ENCODE measurements at regions of chr3 and their contacts with region 1.

Region 1: DNA sequence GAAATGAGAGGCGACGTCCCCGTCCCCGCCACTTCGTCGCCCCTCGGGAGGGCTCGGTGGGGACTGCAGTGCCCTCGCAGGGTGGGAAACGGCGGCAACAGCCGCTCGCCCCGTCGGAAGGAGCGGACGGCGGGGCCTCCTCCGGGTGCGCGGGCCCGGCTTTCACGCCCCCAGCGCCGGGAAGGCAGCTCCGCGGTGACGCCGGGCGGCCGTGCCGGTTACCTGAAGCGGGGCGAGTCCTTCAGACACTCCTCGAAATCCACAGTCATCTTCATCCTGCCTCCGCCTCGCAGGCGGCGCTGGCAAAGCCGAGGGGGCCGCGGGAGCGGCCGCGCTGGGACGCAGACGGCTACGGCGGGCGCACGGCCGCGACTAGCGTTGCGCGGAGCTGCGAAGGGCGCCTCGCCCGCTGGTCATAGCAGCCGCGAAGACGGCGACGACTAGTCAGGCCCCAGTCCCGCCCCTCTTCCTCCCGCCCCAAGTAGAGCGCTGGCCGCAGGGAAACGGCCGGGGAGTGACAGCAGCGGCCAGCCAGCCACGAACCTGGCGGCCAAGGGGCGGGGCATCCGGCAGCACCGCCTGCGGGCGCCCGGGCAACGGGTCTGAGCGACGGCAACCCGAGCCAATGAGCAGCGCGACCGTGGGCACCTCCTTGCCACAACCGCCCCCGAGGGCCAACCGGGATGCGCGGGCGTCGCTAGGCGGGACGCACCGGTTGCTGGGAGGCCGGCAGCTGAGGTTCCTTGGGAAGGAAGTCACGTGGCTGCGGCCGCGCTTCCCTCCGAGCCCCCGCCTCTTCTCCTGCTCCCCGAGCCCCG is at the start of gene ACAP2:
- DNase-seq: peak; percentile 99 to 100
- H3K4me3 ChIP-seq: peak within 1 kb of the TSS; percentile 84 to 89
- H3K27ac ChIP-seq: peak within 1 kb of the TSS; percentile 89 to 92
- H3K4me1 ChIP-seq: peaks cover 0 to 8% of the 10 kb centered on the region in 2 donors
- H3K27me3 ChIP-seq: no peaks in the 10 kb centered on the region
- CTCF ChIP-seq: no peak
- total RNA-seq, gene ACAP2: 20.4 TPM

Region 2: DNA sequence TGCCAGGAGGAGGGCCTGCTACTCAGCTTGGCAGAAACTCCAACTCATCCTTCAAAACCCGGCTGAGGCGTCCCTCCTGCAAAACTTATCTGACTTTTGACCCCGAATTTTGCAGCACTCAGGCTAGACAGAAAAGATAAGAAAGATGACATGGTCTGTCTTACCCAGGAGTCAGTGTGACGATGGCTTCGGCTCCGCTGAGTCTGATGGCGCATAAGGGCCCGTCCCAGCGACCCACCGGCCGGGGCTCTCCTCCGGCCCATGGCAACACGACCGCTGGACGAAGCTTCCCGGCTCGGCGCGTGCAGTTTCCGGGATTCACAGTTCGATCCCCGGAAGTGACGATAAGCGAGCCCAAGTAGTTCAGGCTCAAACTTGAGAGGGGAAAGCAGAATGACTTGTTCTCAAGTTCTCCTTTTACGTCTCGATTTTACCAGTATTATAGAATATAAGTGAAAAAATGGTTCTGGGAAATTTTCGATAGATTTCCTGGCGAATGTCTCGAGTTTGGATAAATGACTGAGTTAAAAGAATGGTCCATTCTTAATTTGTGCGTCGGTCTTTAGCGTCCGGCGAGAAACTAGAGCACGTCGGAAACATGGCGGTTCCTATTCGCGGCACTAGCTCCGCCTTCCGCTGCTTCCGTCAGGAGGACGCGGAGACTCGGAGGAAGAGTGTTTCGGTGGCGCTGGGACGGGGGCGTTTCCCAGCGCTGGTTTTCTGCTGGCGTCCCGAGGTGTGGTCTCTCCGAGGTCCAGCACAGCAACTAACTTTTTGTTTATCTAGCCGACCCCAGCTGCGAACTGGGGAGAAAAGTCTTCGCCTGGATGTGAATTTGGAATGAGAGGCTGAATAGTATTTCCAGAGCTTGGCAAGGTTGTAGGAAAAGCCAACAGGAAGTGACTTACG is 770.6 kb before region 1 on chr3 and contains the start of gene LSG1:
- intact Hi-C with region 1: loop called (anchors 2 kb)
- DNase-seq: peak; percentile 44 to 95
- H3K4me3 ChIP-seq: peak within 1 kb of the TSS; percentile 80 to 96
- H3K27ac ChIP-seq: peak within 1 kb of the TSS; percentile 83 to 89
- H3K4me1 ChIP-seq: peaks cover 0 to 10% of the 10 kb centered on the region in 2 donors
- H3K27me3 ChIP-seq: no peaks in the 10 kb centered on the region
- CTCF ChIP-seq: no peak
- total RNA-seq, gene LSG1: 9.4 TPM

Region 3: DNA sequence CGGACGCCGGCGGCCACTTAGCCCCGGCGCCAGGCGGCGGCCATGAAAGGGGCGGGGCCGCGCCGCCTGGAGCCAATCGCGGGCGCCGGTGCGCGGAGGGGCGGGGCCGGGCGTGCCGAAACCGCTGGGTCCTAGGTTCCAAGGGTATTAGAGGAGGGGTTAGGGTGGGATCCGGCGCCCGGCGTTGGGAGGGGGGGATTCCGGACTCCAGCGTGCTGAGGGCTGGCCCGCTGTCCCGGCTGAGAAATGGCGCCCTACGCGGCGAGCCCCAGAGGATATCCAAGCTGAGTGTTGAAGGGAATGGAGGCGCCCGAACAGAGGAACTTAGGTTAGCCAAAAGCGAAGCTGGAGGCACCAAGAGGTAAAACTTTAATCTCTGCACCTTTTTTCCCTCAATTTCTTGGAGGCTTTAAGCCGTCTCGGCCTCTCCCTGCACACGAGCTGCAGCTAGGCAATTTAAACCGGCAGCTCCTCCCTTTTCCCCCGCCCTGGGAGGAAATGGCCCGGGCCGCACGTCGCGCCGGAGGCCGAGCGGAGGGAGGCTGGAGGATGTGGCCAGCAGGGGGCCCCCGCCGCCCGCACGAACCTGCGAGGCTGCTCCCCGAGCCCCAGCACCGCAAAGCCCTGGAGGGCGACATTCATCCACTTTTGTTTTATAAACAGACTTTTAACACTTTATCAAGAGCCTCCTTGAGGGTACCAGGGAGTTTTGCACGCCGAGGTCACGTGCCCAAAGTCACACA is 171.5 kb before region 1 on chr3 and contains the start of gene XXYLT1:
- intact Hi-C with region 1: loop called (anchors 1 kb)
- DNase-seq: peak; percentile 27 to 91
- H3K4me3 ChIP-seq: peak within 1 kb of the TSS; percentile 67 to 90
- H3K27ac ChIP-seq: peak within 1 kb of the TSS; percentile 70 to 82
- H3K4me1 ChIP-seq: peaks cover 0 to 14% of the 10 kb centered on the region in 2 donors
- H3K27me3 ChIP-seq: no peaks in the 10 kb centered on the region
- CTCF ChIP-seq: peak; percentile 91 to 97 (median 94)
- total RNA-seq, gene XXYLT1: 41.0 TPM

Region 4: GRCh38 chr3:196739671-196740480 is 1297.1 kb after region 1 on chr3 and contains the start of gene PAK2:
- intact Hi-C with region 1: loop called (anchors 5 kb)
- DNase-seq: peak; percentile 70 to 95
- H3K4me3 ChIP-seq: peak within 1 kb of the TSS; percentile 80 to 92
- H3K27ac ChIP-seq: peak within 1 kb of the TSS; percentile 98 to 99
- H3K4me1 ChIP-seq: peaks cover 4 to 12% of the 10 kb centered on the region in 2 donors
- H3K27me3 ChIP-seq: no peaks in the 10 kb centered on the region
- CTCF ChIP-seq: no peak
- total RNA-seq, gene PAK2: 24.4 TPM